HAP-1 (cell line): ENCODE measurements at regions of chr12 and their contacts with region 1.

Region 1: GRCh38 chr12:3275171-3276041 is 198.2 kb downstream of the TSPAN9 start:
- DNase-seq: peak; percentile 54 to 84
- H3K4me3 ChIP-seq: no peak overlapping the region
- H3K4me1 ChIP-seq: no peaks in the 10 kb centered on the region
- H3K27me3 ChIP-seq: no peaks in the 10 kb centered on the region

Region 2: DNA sequence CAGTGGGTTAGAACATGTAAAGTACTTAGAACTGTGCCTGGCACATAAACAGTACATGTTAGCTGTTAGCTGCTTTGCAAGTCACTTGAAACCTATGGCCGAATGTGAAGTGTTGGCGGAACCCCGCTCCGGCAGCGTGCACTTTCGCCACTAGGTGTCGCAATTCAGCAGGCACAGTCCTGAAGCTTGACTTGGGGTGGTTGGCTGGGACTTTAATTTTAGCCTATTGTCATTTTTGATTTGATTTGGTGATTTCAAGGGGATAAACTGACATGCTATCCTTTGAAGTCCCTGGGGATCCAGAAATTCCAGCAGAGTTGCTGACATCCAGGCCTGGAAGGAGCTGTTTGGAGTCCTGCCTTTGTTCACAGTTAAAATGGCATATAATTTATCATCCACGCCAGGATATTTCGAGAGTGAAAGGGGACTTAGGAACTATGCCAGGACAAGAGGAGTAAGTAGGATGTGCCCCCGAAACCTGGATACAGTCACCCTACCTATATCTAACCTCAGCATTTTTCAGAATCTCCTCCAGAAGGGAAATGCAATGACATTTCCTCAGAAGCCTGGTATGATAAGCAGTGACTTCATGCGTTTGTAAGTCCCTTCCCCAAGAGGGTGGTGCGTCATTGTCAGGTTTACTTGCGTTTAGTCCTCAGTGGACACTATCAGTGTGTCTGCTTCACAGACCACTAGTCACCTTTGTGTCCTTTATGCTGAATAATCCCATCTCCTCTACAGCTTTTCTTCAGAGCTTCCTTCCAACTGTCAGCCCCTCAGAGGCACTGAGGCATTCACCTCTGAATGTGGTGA is 201.8 kb before region 1 on chr12:
- in situ Hi-C with region 1: loop called (anchors 5 kb)
- DNase-seq: peak; percentile 69 to 91
- H3K4me3 ChIP-seq: no peak overlapping the region
- H3K4me1 ChIP-seq: peaks cover 11% of the 10 kb centered on the region
- H3K27me3 ChIP-seq: no peaks in the 10 kb centered on the region

Region 3: GRCh38 chr12:3129301-3130056 is 145.9 kb before region 1 on chr12:
- in situ Hi-C with region 1: loop called (anchors 5 kb)
- DNase-seq: no peak
- H3K4me3 ChIP-seq: no peak overlapping the region
- H3K4me1 ChIP-seq: no peaks in the 10 kb centered on the region
- H3K27me3 ChIP-seq: no peaks in the 10 kb centered on the region

Region 4: GRCh38 chr12:3533703-3534386 is 258.4 kb after region 1 on chr12:
- in situ Hi-C with region 1: no loop called
- DNase-seq: no peak
- H3K4me3 ChIP-seq: no peak overlapping the region
- H3K4me1 ChIP-seq: no peaks in the 10 kb centered on the region
- H3K27me3 ChIP-seq: peaks cover 5% of the 10 kb centered on the region; the same call in 1 of the 2 replicates